MCF 10A (cell line): ENCODE measurements at regions of chr19 and their contacts with region 1.

Region 1: GRCh38 chr19:46487802-46488445 is 7.7 kb downstream of the PNMA8B start:
- DNase-seq: peak; percentile 74
- H3K4me3 Mint-ChIP-seq: no peak overlapping the region
- H3K27ac Mint-ChIP-seq: no peak overlapping the region
- H3K4me1 Mint-ChIP-seq: no peaks in the 10 kb centered on the region
- H3K27me3 Mint-ChIP-seq: peaks cover 14% of the 10 kb centered on the region
- CTCF ChIP-seq: peak; percentile 94

Region 2: DNA sequence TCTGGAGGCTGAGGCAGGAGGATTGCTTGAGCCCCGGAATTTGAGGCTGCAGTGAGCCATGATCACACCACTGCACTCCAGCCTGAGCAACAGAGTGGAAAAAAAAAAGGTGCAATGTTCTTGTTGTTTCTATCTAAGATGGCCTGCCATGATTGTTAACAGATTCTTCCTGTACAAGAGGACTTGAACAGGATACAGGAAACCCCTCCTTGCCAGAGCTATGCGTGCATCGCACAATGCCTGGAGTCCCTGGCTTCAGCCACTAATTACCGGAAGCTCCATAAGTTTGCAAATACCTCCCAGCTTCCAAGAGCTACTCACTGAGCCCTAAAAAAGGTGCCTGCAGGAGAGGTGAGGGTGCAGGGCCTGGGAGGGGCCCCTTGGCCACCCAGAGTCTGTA is 204.2 kb before region 1 on chr19:
- CTCF ChIA-PET with region 1: interaction called, 14 read pairs
- POLR2A ChIA-PET with region 1: interaction called, 3 read pairs
- intact Hi-C with region 1: loop called (anchors 1 kb)
- DNase-seq: no peak
- H3K4me3 Mint-ChIP-seq: no peak overlapping the region
- H3K27ac Mint-ChIP-seq: no peak overlapping the region
- H3K4me1 Mint-ChIP-seq: peaks cover 4% of the 10 kb centered on the region
- H3K27me3 Mint-ChIP-seq: no peaks in the 10 kb centered on the region
- CTCF ChIP-seq: no peak

Region 3: DNA sequence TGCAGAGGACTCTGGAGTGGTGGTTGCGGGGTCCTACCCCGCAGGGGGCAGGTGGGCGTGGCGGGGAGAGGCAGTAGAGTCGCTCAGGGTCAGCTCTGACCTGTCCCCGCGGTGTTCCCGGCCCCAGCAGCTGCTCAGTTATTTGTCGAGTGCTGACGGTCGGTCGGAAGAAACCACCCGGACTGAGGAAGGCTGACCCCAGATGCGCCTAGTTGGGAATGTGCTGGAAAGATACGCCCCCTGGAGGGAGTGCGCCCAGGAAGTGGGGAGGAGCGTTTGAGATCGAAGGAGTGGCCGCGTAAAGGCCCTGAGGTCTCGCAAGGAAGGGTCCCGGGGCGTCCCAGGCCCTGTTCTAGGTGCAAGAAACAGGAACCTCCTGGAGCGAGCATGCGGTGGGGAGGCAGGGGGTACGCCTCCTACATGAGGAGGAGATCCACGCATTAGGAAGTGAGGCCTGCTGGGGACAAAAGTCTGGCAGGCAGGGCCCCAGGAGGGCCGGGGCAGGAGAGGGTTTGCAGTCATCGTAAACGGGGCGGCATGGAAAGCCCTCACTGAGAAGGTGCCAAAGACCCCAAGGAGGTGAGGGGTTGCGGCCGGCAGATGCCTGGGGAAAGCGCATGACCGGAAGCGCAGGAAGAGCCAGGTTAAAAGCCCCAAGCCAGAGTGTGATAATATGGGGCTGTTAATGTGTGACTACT is 83.7 kb before region 1 on chr19:
- CTCF ChIA-PET with region 1: interaction called, 24 read pairs
- POLR2A ChIA-PET with region 1: interaction called, 3 read pairs
- intact Hi-C with region 1: loop called (anchors 1 kb)
- DNase-seq: no peak
- H3K4me3 Mint-ChIP-seq: no peak overlapping the region
- H3K27ac Mint-ChIP-seq: no peak overlapping the region
- H3K4me1 Mint-ChIP-seq: peaks cover 5% of the 10 kb centered on the region
- H3K27me3 Mint-ChIP-seq: no peaks in the 10 kb centered on the region
- CTCF ChIP-seq: no peak